ENCODE measurements at regions of chr3 and their contacts with region 1.

Region 1: DNA sequence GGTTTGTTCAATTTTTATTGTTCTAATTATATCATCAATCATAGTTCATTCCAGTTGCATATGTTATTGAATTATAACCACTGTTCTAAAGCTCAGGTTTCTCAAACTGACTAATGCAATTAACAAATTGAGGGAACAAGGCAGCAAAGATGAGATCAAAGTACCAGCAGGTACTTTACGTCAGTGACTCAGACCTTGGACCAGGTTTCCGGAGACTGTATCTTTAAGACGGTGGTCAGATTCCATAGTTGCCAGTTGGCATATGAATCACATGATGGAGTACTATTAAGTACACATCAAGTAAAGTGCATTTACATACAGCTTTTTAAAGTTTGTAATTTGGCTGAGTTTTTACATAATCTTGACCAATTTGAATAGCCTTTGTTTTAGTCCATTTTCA is 583.6 kb upstream of the ROBO2 start:
- DNase-seq: no peak
- ATAC-seq: no peak
- H3K4me3 ChIP-seq: no peak overlapping the region
- H3K4me3 Mint-ChIP-seq: no peak overlapping the region
- H3K27ac ChIP-seq: no peak overlapping the region
- H3K27ac Mint-ChIP-seq: no peak overlapping the region
- H3K4me1 ChIP-seq: no peaks in the 10 kb centered on the region
- H3K4me1 Mint-ChIP-seq: no peaks in the 10 kb centered on the region
- H3K27me3 ChIP-seq: no peaks in the 10 kb centered on the region
- H3K27me3 Mint-ChIP-seq: no peaks in the 10 kb centered on the region
- CTCF ChIP-seq: no peak

Region 2: DNA sequence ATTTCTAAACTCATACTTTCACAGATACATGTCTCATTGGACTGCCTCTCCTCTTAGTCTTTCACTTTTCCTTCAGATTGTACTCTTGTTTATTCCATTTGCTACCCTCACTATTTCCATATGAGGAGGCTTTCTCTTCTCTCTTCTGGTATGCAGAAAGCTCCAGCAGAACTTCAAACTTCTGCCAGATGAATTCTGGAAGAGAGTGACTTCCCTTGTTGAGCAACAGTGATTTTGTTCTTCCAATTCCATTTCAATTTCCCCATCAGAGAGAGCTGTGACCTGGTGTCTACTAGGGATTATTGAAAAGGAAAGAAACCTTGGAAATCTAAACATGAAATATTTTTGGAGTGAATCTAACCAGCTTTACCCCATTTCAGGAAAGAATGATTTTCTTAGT is 147.8 kb before region 1 on chr3:
- CTCF ChIA-PET with region 1: no interaction called
- POLR2A ChIA-PET with region 1: no interaction called
- intact Hi-C with region 1: no loop called
- DNase-seq: no peak
- ATAC-seq: no peak
- H3K4me3 ChIP-seq: no peak overlapping the region
- H3K4me3 Mint-ChIP-seq: no peak overlapping the region
- H3K27ac ChIP-seq: no peak overlapping the region
- H3K27ac Mint-ChIP-seq: no peak overlapping the region
- H3K4me1 ChIP-seq: no peaks in the 10 kb centered on the region
- H3K4me1 Mint-ChIP-seq: no peaks in the 10 kb centered on the region
- H3K27me3 ChIP-seq: no peaks in the 10 kb centered on the region
- H3K27me3 Mint-ChIP-seq: no peaks in the 10 kb centered on the region
- CTCF ChIP-seq: no peak

Region 3: DNA sequence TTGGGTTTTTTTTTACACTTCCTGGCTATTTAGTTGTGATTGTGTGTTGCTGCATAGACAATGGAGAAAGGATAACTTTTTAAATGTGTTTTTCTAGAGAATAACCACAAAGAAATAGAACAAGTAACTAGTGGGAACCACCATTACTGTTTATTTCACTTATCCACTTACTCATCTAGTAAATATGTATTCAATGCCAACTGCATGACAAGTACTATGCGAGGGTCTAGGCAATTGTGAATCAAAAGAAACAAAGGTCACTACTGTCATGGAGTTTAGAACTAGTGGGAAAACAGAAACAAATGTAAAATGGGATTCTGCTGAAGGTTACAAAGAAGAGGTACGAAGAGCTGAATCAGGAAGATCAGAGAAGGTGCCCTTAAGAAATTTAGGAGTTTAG is 17.4 kb before region 1 on chr3:
- CTCF ChIA-PET with region 1: no interaction called
- POLR2A ChIA-PET with region 1: no interaction called
- intact Hi-C with region 1: no loop called
- DNase-seq: no peak
- ATAC-seq: no peak
- H3K4me3 ChIP-seq: no peak overlapping the region
- H3K4me3 Mint-ChIP-seq: no peak overlapping the region
- H3K27ac ChIP-seq: no peak overlapping the region
- H3K27ac Mint-ChIP-seq: no peak overlapping the region
- H3K4me1 ChIP-seq: no peaks in the 10 kb centered on the region
- H3K4me1 Mint-ChIP-seq: no peaks in the 10 kb centered on the region
- H3K27me3 ChIP-seq: no peaks in the 10 kb centered on the region
- H3K27me3 Mint-ChIP-seq: no peaks in the 10 kb centered on the region
- CTCF ChIP-seq: no peak

Region 4: DNA sequence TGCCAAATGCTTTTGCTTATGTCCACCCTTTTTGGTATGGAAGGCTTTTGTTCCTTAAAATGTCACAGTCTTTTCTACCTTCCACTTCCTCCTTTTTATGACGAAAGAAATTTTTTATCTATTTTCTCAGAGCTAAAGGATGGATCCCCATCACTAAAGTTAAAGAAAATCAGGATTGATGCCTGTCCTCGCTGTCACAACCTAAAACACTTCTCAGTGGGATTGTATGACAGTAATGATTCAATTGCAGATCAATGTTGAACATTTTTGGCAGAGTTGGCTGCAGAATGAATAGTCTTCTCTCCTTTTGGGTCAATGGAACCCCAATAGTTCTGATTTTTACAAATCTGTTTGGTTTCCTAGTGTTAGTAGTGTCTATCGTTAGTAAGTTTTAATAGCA is 33.7 kb after region 1 on chr3:
- CTCF ChIA-PET with region 1: no interaction called
- POLR2A ChIA-PET with region 1: no interaction called
- intact Hi-C with region 1: loop called in 1 of 2 experiments (anchors 1 kb)
- DNase-seq: no peak
- ATAC-seq: no peak
- H3K4me3 ChIP-seq: no peak overlapping the region
- H3K4me3 Mint-ChIP-seq: no peak overlapping the region
- H3K27ac ChIP-seq: no peak overlapping the region
- H3K27ac Mint-ChIP-seq: no peak overlapping the region
- H3K4me1 ChIP-seq: no peaks in the 10 kb centered on the region
- H3K4me1 Mint-ChIP-seq: no peaks in the 10 kb centered on the region
- H3K27me3 ChIP-seq: no peaks in the 10 kb centered on the region
- H3K27me3 Mint-ChIP-seq: no peaks in the 10 kb centered on the region
- CTCF ChIP-seq: no peak